ENCODE measurements at regions of chr22 and their contacts with region 1.

Region 1: DNA sequence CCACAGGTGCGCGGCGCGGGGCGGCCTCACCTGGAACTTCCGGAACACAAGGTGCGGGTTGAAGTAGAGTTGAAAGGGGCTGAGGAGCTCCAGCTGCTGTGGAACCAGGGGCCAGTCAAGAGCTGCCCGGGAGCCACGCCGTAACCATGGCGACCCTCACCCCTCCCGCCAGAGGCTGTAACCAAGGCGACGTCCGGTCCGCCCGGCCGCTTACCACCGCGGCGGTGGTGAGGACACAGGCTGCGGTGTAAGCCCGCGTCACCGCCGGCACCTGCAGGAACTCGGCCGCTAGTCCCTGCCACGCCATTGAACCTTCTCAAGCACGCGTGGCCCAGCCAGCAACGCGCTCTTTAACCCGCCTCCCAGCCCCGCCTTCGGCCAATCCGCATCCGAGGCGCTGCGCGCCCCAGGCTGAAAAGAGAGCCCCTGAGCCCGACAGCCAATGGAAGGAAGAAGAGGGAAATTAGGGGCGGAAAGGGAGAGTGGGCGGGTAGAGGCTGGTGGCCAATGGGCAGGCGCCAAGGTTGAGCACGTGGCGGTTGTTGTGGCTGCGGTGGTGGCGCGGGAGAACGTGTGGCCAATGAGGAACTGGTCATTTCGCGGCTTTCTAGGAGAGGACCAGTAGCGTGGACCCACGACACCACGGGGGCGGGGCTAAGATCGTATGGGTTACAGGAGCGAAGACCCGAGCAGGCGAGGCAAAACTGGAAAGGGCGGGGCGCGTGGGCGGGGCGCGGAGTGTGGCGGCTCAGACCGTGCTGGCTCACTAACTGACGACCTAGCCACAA is at the start of gene DERL3:
- DNase-seq: peak; percentile 92
- H3K4me3 ChIP-seq: peak within 1 kb of the TSS; percentile 35
- CTCF ChIP-seq: no peak

Region 2: GRCh38 chr22:23539135-23539838 is 299.6 kb before region 1 on chr22:
- in situ Hi-C with region 1: loop called (anchors 10 kb)
- DNase-seq: peak; percentile 45
- H3K4me3 ChIP-seq: no peak overlapping the region
- CTCF ChIP-seq: peak; percentile 81